ENCODE measurements at regions of chr2 and their contacts with region 1.

Region 1: GRCh38 chr2:166127217-166128155 is at the start of gene SCN1A:
- DNase-seq: no peak
- H3K4me3 ChIP-seq: no peak within 1 kb of the TSS
- H3K27ac ChIP-seq: no peak within 1 kb of the TSS
- H3K4me1 ChIP-seq: peaks cover 0 to 7% (median 4%) of the 10 kb centered on the region in 4 donors
- H3K27me3 ChIP-seq: peaks cover 0 to 16% (median 0%) of the 10 kb centered on the region in 4 donors
- CTCF ChIP-seq: peak; percentile 35 to 65 (median 61)
- EP300 ChIP-seq: no peak
- POLR2A ChIP-seq: no peak
- total RNA-seq, gene SCN1A: under 0.01 TPM in 1 of 4 donors, not detected in the others

Region 2: GRCh38 chr2:165648801-165649200 is 478.7 kb before region 1 on chr2:
- intact Hi-C with region 1: no loop called
- DNase-seq: no peak
- H3K4me3 ChIP-seq: no peak overlapping the region
- H3K27ac ChIP-seq: no peak overlapping the region
- H3K4me1 ChIP-seq: no peaks in the 10 kb centered on the region
- H3K27me3 ChIP-seq: no peaks in the 10 kb centered on the region
- CTCF ChIP-seq: no peak
- EP300 ChIP-seq: no peak
- POLR2A ChIP-seq: no peak

Region 3: DNA sequence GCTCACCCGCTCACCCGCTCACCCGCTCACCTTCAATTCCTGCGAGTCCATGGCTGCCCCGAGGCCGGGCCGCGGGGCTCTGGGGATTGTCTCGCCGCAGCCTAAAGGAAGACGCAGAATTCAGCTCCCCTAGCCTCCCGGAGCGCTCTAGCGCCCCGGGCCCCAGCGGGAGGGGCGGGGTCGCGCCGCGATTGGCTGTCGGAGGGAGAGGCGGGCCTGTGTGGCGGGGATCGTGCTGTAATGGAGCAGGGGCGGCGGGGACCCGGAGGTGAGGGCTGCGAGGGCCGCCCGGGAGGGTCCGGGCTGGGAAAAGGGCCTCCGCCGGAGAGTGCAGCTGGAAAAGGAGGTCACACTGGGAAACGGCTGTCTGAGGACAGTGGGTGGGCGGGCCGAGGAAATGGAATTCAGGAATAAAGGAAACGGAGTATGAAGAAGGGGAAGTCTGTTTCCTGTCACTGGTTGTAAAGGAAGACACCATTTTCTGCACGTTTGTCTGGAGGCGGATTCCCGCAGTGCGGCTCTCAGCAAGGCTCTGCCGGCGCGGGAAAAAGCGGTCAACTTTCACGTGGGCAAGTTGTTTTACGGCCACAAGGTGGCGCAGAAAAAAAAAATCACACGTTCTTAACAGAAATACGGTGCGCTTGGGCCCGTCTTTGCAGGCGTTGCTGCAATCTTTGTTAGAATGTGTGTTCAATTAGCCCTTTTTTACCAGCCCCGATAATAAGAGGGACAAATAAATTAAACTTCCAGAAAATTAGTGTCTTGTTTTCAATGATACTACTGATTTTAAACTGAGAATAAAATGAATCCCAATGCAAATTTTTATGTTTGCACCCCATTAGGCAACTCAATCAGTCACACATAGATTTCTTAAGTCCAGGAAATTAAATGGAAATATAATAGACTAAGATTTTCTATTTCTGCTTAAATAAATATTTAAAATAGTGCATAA is 173.6 kb before region 1 on chr2 and contains the start of gene TTC21B:
- intact Hi-C with region 1: loop called (anchors 1 kb)
- DNase-seq: peak; percentile 97
- H3K4me3 ChIP-seq: peak within 1 kb of the TSS; percentile 65 to 91 (median 70)
- H3K27ac ChIP-seq: peak within 1 kb of the TSS; percentile 83 to 90 (median 86)
- H3K4me1 ChIP-seq: peaks cover 25 to 41% (median 36%) of the 10 kb centered on the region in 4 donors
- H3K27me3 ChIP-seq: no peaks in the 10 kb centered on the region
- CTCF ChIP-seq: peak; percentile 66 to 85 (median 84)
- EP300 ChIP-seq: no peak
- POLR2A ChIP-seq: peak; percentile 49
- total RNA-seq, gene TTC21B: 19.9 to 37.0 (median 22.9) TPM

Region 4: GRCh38 chr2:166017208-166017607 is 110.3 kb before region 1 on chr2:
- intact Hi-C with region 1: no loop called
- DNase-seq: no peak
- H3K4me3 ChIP-seq: no peak overlapping the region
- H3K27ac ChIP-seq: no peak overlapping the region
- H3K4me1 ChIP-seq: no peaks in the 10 kb centered on the region
- H3K27me3 ChIP-seq: no peaks in the 10 kb centered on the region
- CTCF ChIP-seq: no peak
- EP300 ChIP-seq: no peak
- POLR2A ChIP-seq: no peak

Region 5: GRCh38 chr2:166057370-166058164 is 69.9 kb before region 1 on chr2:
- intact Hi-C with region 1: loop called (anchors 5 kb)
- DNase-seq: no peak
- H3K4me3 ChIP-seq: no peak overlapping the region
- H3K27ac ChIP-seq: no peak overlapping the region
- H3K4me1 ChIP-seq: no peaks in the 10 kb centered on the region
- H3K27me3 ChIP-seq: no peaks in the 10 kb centered on the region
- CTCF ChIP-seq: peak in 2 of 3 experiments; percentile 40 to 43
- EP300 ChIP-seq: no peak
- POLR2A ChIP-seq: no peak